Right cardiac atrium (tissue), 5 donors: ENCODE measurements at regions of chr19 and their contacts with region 1.

Region 1: DNA sequence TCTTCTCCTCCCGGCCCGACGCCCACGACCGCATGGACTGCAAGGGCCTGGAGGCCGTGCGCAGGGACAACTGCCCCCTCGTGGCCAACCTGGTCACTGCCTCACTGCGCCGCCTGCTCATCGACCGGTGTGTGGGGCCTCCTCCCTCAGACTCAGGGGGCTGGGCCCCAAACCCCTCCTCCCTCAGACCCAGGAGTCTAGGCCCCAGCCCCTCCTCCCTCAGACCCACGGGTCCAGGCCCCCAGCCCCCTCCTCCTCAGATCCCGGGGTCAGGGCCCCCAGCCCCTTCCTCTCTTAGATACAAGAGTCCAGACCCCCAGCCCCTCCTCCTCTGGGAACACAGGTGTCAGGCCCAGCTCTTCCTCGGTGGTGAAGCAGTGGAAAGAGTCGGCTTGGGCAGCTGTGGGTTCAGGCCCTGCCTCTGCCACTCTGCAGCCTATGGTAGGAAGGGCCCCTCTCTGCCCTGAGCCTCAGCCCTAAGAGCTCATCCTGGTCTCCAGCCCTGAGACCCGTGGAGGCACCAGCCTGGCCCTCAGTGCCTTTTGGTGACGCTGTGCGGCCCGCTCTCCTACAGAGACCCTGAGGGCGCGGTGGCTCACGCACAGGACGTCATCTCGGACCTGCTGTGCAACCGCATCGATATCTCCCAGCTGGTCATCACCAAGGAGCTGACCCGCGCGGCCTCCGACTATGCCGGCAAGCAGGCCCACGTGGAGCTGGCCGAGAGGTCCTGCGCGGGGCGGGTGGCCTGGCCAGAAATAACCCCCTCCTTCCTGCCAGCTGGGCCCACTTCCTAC is 3.7 kb upstream of the SPIB start:
- DNase-seq: peak; percentile 76 to 92 (median 89)
- ATAC-seq: peak; percentile 69 to 86
- H3K4me3 ChIP-seq: no peak overlapping the region
- H3K27ac ChIP-seq: no peak overlapping the region
- H3K4me1 ChIP-seq: no peaks in the 10 kb centered on the region
- H3K27me3 ChIP-seq: no peaks in the 10 kb centered on the region

Region 2: GRCh38 chr19:50147462-50148423 is 267.3 kb before region 1 on chr19:
- intact Hi-C with region 1: no loop called
- DNase-seq: peak; percentile 89 to 97 (median 95)
- ATAC-seq: peak; percentile 98 to 99
- H3K4me3 ChIP-seq: peak overlapping the region; percentile 56
- H3K27ac ChIP-seq: peak overlapping the region; percentile 65
- H3K4me1 ChIP-seq: no peaks in the 10 kb centered on the region
- H3K27me3 ChIP-seq: no peaks in the 10 kb centered on the region

Region 3: DNA sequence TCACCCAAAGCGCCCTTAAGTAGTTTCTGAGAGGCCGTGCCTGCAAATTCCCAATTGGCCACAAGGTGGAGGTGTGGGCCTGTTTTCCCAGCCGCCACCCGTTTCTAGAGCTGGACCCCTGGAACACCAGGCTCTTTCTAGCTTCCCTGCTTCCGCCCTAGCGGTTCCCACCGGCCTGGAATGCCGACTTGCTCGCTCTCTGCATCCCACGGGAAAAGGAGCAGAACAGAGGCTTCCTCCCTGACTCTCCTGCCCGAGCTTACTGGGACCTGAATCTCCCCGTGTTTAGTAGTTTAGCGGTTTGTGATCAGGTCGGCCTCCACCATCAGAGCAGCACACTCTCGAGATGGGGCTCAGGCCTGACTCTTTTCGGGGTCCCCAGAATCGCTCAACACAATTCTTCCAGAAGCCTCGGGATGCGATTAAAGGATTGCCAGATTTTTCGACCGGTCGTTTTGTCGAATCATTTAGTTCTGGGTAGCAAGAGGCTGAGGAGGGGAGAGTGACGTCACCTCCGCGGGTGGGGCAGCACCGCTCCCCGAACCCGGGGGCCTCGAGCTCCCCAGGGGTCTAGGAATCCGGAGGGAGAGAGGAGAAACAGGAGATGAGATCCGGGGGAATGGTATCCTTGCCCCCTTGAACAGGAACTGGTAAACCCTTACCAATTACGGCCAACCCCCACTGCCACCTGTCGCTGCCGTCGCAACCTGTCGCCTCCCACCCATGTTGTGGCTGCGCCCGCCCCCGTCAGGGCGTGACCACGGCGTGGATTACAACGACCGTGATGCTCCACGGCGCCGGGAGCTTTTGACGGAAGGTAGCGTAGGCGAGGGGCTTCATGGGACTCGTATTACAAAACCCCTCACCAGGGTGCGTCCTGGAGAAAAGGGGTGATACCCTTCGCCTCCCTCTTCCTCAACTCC is 57.6 kb before region 1 on chr19:
- intact Hi-C with region 1: loop called in 1 of 4 experiments (anchors 5 kb)
- DNase-seq: peak; percentile 75 to 91 (median 89)
- ATAC-seq: peak; percentile 73 to 81
- H3K4me3 ChIP-seq: peak overlapping the region; percentile 45
- H3K27ac ChIP-seq: peak overlapping the region; percentile 96
- H3K4me1 ChIP-seq: no peaks in the 10 kb centered on the region
- H3K27me3 ChIP-seq: no peaks in the 10 kb centered on the region

Region 4: GRCh38 chr19:50368649-50369570 is 46.2 kb before region 1 on chr19:
- intact Hi-C with region 1: loop called in 2 of 4 experiments (anchors 5 kb)
- DNase-seq: peak; percentile 79 to 93 (median 90)
- ATAC-seq: peak; percentile 94 to 96
- H3K4me3 ChIP-seq: peak overlapping the region; percentile 78
- H3K27ac ChIP-seq: peak overlapping the region; percentile 91
- H3K4me1 ChIP-seq: no peaks in the 10 kb centered on the region
- H3K27me3 ChIP-seq: no peaks in the 10 kb centered on the region